Activated CD4-positive, alpha-beta T cell treated with anti-CD3 and anti-CD28 coated beads, Interleukin-2, amount 10 ng/mL, durations not matched to agents 24 days and 14 days (primary cell): ENCODE measurements at regions of chr6 and their contacts with region 1.

Region 1: DNA sequence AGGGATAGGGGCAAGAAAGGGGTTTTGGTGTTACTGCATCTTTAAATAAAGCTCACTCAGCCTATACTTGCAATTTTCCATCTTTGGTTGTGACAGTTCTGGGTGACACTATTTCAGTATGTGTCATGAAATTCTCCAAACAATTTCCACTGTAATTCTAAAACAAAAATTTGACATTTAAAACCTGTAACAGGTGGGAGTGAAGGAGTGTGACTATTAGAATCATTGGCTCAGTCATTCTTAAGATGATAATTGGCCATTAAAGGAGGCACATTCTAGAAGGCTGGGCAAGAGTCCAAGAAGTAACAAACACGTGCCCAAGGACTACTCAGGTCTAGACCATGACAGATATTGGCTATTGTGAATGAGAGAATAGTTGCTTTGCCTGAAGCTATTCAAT is 153.3 kb upstream of the ARG1 start:
- DNase-seq: no peak
- H3K4me3 Mint-ChIP-seq: peak overlapping the region; percentile 3
- H3K27ac Mint-ChIP-seq: peak overlapping the region; percentile 82
- H3K4me1 Mint-ChIP-seq: peaks cover 26% of the 10 kb centered on the region
- H3K27me3 Mint-ChIP-seq: no peaks in the 10 kb centered on the region

Region 2: GRCh38 chr6:131244942-131245341 is 174.8 kb before region 1 on chr6:
- intact Hi-C with region 1: no loop called
- DNase-seq: no peak
- H3K4me3 Mint-ChIP-seq: no peak overlapping the region
- H3K27ac Mint-ChIP-seq: no peak overlapping the region
- H3K4me1 Mint-ChIP-seq: peaks cover 7% of the 10 kb centered on the region
- H3K27me3 Mint-ChIP-seq: no peaks in the 10 kb centered on the region

Region 3: GRCh38 chr6:131451321-131452144 is 31.8 kb after region 1 on chr6:
- intact Hi-C with region 1: loop called (anchors 5 kb)
- DNase-seq: no peak
- H3K4me3 Mint-ChIP-seq: peak overlapping the region; percentile 32
- H3K27ac Mint-ChIP-seq: peak overlapping the region; percentile 88
- H3K4me1 Mint-ChIP-seq: peaks cover 35% of the 10 kb centered on the region
- H3K27me3 Mint-ChIP-seq: no peaks in the 10 kb centered on the region